Posterior cingulate gyrus (tissue), 11 donors: ENCODE measurements at regions of chr14 and their contacts with region 1.

Region 1: GRCh38 chr14:56117765-56118610 is at the start of gene PELI2:
- DNase-seq: peak; percentile 59 to 97 (median 76)

Region 2: GRCh38 chr14:55579724-55580469 is 538.1 kb before region 1 on chr14 and contains the start of gene KTN1:
- intact Hi-C with region 1: loop called (anchors 10 kb)
- DNase-seq: peak; percentile 58 to 97 (median 79)

Region 3: GRCh38 chr14:55976219-55976618 is 141.8 kb before region 1 on chr14:
- intact Hi-C with region 1: loop called (anchors 10 kb)
- DNase-seq: no peak

Region 4: GRCh38 chr14:56055511-56055910 is 62.5 kb before region 1 on chr14:
- intact Hi-C with region 1: loop called (anchors 2 kb)
- DNase-seq: peak in 1 of 10 donors; percentile 16

Region 5: GRCh38 chr14:56216626-56217379 is 98.8 kb after region 1 on chr14:
- intact Hi-C with region 1: loop called (anchors 10 kb)
- DNase-seq: peak; percentile 24 to 87 (median 60)

Region 6: DNA sequence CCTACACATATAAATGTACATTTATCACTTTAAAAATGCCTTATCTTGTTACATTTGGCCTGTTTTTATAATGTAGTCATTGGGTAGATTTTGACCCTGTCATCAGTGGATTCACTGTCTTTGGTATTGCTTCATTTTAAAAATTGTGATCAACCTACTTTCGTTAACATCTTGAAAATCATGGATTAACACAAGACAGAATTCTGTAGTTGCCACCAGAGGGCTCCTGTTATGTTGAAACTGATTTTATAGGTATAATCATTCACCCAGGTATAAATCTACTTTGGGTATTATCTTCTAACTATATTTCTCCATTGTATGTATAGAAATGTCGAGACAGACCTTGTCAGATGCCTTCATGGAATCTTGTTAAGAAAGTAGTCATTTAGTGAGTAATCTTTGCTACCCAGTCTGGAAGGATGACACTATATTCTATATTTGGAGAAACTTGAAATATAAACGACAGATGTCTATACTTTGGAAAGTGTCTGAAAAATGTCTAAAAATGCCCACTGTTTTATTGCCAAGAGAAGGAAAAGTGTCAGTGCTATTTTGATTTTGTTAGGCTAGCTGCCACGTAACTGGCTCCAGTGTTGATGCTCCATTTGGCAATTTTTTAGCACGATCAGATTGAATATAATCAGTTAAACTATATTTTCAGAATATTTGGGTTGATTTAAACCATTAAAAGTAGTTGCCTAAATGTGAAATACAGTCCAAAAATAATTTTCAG is 129.6 kb after region 1 on chr14:
- intact Hi-C with region 1: no loop called
- DNase-seq: no peak

Region 7: DNA sequence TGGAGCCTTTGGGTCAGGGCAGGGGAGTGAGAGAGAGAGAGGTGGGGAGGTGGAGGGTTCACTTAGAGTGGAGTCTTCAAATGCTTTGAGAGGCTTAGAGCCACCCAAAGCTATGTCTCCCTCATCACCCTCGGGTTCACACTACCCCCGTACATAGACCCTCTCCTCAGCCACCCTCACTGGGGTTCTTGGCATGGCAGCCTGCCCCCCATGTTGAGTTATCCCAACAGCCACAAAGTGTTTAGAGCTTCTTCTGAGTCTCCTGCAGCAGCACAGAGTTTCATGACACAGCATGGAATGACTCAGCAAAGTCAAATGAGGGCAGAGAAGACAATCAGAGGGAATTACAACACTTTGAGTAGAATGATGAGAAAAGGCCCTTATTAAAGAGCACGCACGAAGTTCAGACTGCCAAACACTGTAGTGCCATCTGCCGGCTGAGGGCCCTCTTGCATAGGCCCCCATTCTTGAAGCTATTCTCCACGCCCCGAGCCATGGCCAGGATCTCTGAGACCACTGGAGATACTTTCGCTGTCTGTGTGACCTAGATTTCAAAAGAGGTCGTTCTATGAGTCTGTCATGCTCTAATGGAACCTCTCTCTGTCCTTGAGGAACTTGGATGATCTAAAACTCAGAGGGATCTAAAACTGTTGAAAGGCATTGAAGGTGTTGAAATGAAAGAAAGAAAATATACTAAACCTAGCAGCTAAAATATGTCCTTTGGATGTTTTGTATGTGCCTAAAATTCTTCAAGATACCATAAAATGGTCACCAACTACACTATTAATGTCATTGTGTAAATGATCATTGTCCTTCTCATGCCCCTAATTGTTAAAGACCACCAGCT is 222.1 kb after region 1 on chr14:
- intact Hi-C with region 1: loop called (anchors 5 kb)
- DNase-seq: peak; percentile 35 to 95 (median 74)